Naive thymus-derived CD4-positive, alpha-beta T cell (primary cell): ENCODE measurements at regions of chr6 and their contacts with region 1.

Region 1: GRCh38 chr6:99613409-99613704 is 6.7 kb downstream of the PRDM13 start:
- DNase-seq: peak in 1 of 9 donors; percentile 43
- ATAC-seq: peak; percentile 65
- H3K4me3 ChIP-seq: no peak overlapping the region
- H3K4me3 Mint-ChIP-seq: peak overlapping the region in 7 of 10 donors; percentile 41 to 79 (median 72)
- H3K27ac ChIP-seq: no peak overlapping the region
- H3K27ac Mint-ChIP-seq: no peak overlapping the region
- H3K4me1 ChIP-seq: peaks cover 16% of the 10 kb centered on the region in 2 donors
- H3K4me1 Mint-ChIP-seq: peaks cover 11 to 34% (median 18%) of the 10 kb centered on the region in 7 donors
- H3K27me3 ChIP-seq: peaks cover 26 to 54% of the 10 kb centered on the region in 2 donors
- H3K27me3 Mint-ChIP-seq: peaks cover 66 to 88% (median 80%) of the 10 kb centered on the region in 5 donors

Region 2: DNA sequence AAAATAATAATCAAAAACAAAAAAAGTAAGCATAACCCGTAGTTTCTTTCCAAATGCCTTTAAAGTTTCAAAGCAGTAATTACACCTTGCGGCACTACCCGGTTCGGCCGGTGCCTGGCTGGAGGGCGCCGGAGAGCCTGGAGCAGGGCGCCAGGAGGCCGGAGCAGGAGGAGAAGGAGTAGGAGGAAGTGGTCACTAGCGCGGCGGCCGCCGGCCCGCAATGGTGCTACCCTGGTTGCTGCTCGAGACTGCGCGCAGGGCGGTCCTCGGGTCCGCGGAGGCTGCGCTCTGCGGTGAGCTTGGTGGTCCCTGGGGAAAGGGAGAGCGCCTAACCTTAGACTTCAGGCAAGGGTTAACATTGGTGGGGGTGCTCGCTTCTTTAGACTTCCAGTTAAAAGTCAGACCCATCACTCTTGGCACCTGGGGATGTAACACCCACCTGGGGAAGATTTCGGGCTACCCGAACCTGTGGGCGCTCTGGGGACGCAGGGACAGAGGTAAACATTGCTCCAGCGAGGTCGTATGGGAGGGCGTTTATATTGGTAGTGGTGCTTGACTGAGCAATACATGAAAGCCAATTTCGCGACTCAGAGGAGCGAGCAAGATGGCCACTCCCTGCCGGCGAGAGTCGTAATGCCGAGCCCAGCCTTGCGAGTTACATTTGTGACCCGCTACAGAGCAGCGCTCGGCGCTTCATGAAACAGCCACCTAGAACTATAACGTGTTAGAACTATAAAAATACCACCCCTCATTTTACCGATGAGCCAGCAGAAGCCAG is 92.3 kb before region 1 on chr6:
- CTCF ChIA-PET with region 1: no interaction called
- POLR2A ChIA-PET with region 1: no interaction called
- intact Hi-C with region 1: loop called (anchors 5 kb)
- DNase-seq: peak; percentile 43 to 79 (median 62)
- ATAC-seq: peak; percentile 92
- H3K4me3 ChIP-seq: peak overlapping the region; percentile 73
- H3K4me3 Mint-ChIP-seq: peak overlapping the region; percentile 87 to 99 (median 92)
- H3K27ac ChIP-seq: peak overlapping the region; percentile 60
- H3K27ac Mint-ChIP-seq: peak overlapping the region; percentile 38 to 97 (median 90)
- H3K4me1 ChIP-seq: peaks cover 4 to 11% of the 10 kb centered on the region in 2 donors
- H3K4me1 Mint-ChIP-seq: peaks cover 12 to 26% (median 17%) of the 10 kb centered on the region in 7 donors
- H3K27me3 ChIP-seq: no peaks in the 10 kb centered on the region
- H3K27me3 Mint-ChIP-seq: peaks cover 0 to 15% (median 0%) of the 10 kb centered on the region in 5 donors

Region 3: DNA sequence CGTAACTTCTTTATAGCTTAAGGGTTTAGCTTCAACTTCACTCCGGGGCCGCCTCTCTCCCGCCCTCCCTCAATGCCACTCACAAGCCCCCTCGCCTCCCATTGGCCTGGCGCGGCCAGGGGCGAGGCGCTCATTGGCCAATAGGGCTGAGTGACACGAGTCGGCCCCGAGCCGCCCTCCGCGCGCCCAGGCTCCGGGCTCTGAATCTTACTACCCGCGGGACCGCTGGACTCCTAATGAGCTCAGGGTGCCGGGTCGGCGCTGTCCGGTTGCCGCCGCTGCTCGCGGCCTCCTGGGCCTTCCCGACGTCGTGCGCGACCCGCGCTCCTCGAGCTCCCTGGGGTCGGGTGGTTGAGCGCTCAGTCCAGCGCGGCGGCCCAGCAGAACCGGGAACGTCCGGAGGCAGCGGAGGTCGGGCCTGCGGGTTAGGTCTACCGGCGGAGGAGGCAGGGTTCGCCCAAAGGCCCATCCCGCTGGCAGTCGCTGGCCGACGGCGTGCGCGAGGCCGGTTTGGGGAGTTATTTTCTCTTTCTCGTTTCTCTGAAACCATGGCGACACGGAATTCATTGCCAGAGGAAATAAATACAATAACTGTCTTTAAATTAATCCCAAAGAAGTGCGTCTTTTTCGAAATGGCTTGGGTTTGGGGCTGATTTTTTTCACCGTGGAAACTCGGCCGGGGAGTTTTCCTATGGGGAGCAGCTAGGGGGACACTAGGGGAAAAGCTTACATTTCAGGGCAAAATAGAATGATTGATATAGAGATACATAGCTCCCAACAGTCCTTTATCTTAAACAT is 851.7 kb after region 1 on chr6 and contains the start of gene SIM1:
- CTCF ChIA-PET with region 1: no interaction called
- POLR2A ChIA-PET with region 1: no interaction called
- intact Hi-C with region 1: loop called in 1 of 2 experiments (anchors 2 kb)
- DNase-seq: no peak
- ATAC-seq: peak; percentile 32
- H3K4me3 ChIP-seq: no peak within 1 kb of the TSS
- H3K4me3 Mint-ChIP-seq: peak within 1 kb of the TSS; percentile 13 to 66 (median 54)
- H3K27ac ChIP-seq: no peak within 1 kb of the TSS
- H3K27ac Mint-ChIP-seq: peak within 1 kb of the TSS in 1 of 9 donors; percentile 78
- H3K4me1 ChIP-seq: peaks cover 6 to 15% of the 10 kb centered on the region in 2 donors
- H3K4me1 Mint-ChIP-seq: peaks cover 7 to 47% (median 24%) of the 10 kb centered on the region in 7 donors
- H3K27me3 ChIP-seq: peaks cover 32 to 67% of the 10 kb centered on the region in 2 donors
- H3K27me3 Mint-ChIP-seq: peaks cover 84 to 93% (median 87%) of the 10 kb centered on the region in 5 donors
- total RNA-seq, gene SIM1: not detected

Region 4: GRCh38 chr6:101401792-101402621 is 1788.7 kb after region 1 on chr6:
- CTCF ChIA-PET with region 1: no interaction called
- POLR2A ChIA-PET with region 1: no interaction called
- intact Hi-C with region 1: loop called in 1 of 2 experiments (anchors 5 kb)
- DNase-seq: no peak
- ATAC-seq: no peak
- H3K4me3 ChIP-seq: no peak overlapping the region
- H3K4me3 Mint-ChIP-seq: no peak overlapping the region
- H3K27ac ChIP-seq: no peak overlapping the region
- H3K27ac Mint-ChIP-seq: no peak overlapping the region
- H3K4me1 ChIP-seq: no peaks in the 10 kb centered on the region
- H3K4me1 Mint-ChIP-seq: peaks cover 0 to 4% (median 0%) of the 10 kb centered on the region in 7 donors
- H3K27me3 ChIP-seq: peaks cover 0 to 4% of the 10 kb centered on the region in 2 donors
- H3K27me3 Mint-ChIP-seq: peaks cover 54 to 76% (median 62%) of the 10 kb centered on the region in 5 donors